Dendritic cell treated with granulocyte-macrophage colony-stimulating factor and Interleukin-4, amounts not matched to agents 40 ng/mL and 50 ng/mL, for 4 days (primary cell): ENCODE measurements at regions of chr15 and their contacts with region 1.

Region 1: GRCh38 chr15:22838292-22839042 is at the start of gene NIPA2:
- H3K4me3 Mint-ChIP-seq: peak within 1 kb of the TSS; percentile 92
- H3K27ac Mint-ChIP-seq: peak within 1 kb of the TSS; percentile 95
- H3K4me1 Mint-ChIP-seq: peaks cover 35% of the 10 kb centered on the region
- H3K27me3 Mint-ChIP-seq: no peaks in the 10 kb centered on the region

Region 2: GRCh38 chr15:22786868-22787698 is 51.4 kb before region 1 on chr15:
- intact Hi-C with region 1: loop called (anchors 2 kb)
- H3K4me3 Mint-ChIP-seq: peak overlapping the region; percentile 86
- H3K27ac Mint-ChIP-seq: peak overlapping the region; percentile 60
- H3K4me1 Mint-ChIP-seq: peaks cover 14% of the 10 kb centered on the region
- H3K27me3 Mint-ChIP-seq: peaks cover 5% of the 10 kb centered on the region

Region 3: DNA sequence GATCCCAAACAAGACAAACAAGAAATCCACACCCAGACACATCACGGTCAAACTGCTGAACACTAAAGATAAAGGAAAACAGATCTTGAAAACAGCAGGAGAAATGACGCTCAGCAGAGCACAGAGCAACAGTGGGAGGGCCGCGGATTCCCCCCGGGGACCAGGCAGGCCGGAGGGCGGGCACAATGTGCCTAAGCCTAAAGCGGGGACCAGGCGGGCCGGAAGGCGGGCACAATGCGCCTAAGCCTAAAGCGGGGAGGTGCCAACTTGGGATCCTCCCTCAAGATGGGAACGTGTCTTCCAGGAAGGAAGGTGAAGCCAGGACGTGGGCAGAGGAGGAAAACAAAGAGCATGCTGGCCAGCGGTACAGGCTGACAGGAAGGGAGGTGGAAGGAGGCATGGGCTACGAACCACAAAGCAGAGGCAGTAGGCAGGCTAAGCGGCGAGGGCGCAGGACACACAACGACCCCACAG is 110.6 kb after region 1 on chr15:
- intact Hi-C with region 1: no loop called
- H3K4me3 Mint-ChIP-seq: peak overlapping the region; percentile 27
- H3K27ac Mint-ChIP-seq: peak overlapping the region; percentile 78
- H3K4me1 Mint-ChIP-seq: peaks cover 65% of the 10 kb centered on the region
- H3K27me3 Mint-ChIP-seq: no peaks in the 10 kb centered on the region

Region 4: DNA sequence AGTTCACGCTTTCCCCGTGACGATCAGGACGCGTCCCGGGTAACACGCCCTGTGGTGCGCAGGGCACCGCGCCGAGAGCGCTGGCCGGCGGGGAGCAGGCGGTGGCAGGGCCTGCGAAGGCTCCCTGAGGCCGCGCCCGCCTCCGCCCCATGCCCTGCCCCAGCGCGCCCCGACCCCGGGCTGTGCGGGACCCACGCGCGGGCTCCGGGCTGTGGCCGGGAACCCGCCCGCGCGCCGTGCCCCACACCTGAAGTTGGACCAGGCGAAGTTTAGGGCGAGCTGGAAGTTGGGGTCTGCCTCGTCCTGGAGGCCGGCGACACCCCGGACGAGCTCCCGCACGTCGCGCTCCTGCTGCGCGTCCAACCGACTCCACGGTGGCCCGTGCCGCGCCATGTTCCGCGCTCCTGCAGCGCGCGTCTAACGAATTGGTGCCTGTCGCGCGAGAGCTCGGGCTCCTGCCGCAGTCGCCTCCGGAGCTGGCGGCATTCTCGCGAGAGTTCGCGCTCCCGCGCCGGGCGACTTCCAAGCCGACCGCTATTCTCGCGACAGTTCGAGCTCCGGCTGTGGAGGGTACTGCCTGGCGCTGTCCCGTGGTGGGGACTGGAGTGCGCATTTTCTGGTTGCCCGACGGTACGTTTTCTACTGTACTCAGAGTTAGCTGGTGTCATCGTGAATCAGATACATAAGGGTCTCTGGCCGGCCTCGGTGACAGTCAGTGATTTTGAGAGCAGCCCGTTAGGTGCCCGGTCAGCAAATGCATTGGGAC is 200.9 kb after region 1 on chr15 and contains the start of gene TUBGCP5:
- intact Hi-C with region 1: loop called (anchors 2 kb)
- H3K4me3 Mint-ChIP-seq: peak within 1 kb of the TSS; percentile 88
- H3K27ac Mint-ChIP-seq: peak within 1 kb of the TSS; percentile 86
- H3K4me1 Mint-ChIP-seq: peaks cover 16% of the 10 kb centered on the region
- H3K27me3 Mint-ChIP-seq: no peaks in the 10 kb centered on the region